ENCODE measurements at regions of chr2 and their contacts with region 1.

Region 1: DNA sequence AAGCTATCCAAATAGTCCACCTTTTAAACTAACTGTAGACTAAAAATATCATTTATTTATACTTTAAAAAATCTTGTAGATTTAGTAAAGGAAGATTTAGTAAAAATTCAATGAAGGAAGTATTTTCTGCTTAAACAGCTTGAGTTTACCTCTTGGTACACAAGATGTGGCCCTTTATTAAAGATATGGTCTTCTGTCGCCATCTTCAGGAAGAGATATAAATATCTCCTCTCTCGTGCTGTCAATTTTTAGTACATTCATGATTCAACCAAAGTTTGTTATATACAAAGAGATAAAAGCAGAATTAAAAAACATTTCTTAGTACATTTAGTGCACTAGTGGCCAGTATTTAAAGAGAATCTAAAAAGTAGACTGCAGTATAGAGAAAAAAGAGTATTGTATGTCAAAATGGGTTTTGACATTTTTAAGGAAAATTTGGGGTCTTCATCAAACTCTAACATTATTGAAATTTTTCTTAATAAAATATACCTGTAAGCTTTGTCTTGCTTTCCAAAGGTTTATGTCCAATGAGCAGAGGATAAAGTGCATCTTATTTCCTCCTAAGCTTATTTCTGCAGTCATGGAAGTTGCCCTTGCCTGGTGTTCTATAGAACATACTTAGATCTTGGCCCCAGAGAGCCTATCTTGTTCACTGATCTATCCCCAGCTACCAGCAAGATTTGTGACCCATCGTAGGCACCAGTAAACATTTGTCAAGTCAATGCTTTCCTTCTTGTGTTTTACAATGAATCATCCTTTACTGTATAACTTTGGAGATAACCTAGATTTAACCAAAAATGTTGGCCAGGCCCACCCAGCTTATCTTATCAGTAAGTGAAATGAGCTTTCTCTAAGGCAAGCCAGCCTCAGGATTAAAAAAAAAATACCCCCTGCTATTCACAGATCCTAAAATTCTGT is 18.5 kb upstream of the EML6 start:
- DNase-seq: no peak
- H3K4me3 ChIP-seq: no peak overlapping the region
- H3K27ac ChIP-seq: no peak overlapping the region
- H3K4me1 ChIP-seq: no peaks in the 10 kb centered on the region
- H3K27me3 ChIP-seq: no peaks in the 10 kb centered on the region
- CTCF ChIP-seq: peak; percentile 65 to 85 (median 67)
- POLR2A ChIP-seq: no peak

Region 2: DNA sequence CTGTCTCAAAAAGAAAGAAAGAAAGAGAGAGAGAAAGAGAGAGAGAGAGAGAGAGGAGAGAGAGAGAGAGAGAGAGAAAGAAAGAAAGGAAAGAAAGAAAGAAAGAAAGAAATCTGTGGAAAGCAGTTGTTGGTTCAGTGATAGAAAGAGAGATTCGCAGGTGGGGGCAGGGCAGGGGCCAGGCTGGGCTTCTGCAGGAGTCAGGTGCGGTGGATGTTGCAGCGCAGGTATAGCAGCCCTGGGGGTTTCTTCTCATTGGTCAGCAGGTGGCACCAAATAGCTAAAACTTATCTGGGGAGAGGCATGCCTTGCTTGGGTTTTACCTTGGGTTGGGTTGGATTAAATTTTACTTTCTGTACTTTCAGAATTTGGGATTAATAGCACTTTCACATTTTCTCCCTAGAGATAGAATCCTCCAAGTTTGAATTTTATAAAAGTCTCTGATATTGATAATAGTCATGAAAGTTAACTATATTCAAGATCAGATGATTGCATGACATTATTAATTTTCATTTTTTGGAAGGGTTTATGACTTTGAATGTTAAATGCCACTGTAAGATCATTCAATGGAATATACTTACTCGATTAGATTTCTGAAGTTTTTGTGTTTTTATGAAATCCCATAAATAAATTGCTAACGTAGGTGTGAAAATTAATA is 182.2 kb before region 1 on chr2:
- intact Hi-C with region 1: loop called (anchors 10 kb)
- DNase-seq: peak in 1 of 2 donors; percentile 40
- H3K4me3 ChIP-seq: no peak overlapping the region
- H3K27ac ChIP-seq: peak overlapping the region in 1 of 2 donors; percentile 36
- H3K4me1 ChIP-seq: no peaks in the 10 kb centered on the region
- H3K27me3 ChIP-seq: no peaks in the 10 kb centered on the region
- CTCF ChIP-seq: peak; percentile 43 to 63 (median 60)
- POLR2A ChIP-seq: no peak

Measured in uterus (tissue), 4 donors.